ENCODE measurements at regions of chr7 and their contacts with region 1.

Region 1: DNA sequence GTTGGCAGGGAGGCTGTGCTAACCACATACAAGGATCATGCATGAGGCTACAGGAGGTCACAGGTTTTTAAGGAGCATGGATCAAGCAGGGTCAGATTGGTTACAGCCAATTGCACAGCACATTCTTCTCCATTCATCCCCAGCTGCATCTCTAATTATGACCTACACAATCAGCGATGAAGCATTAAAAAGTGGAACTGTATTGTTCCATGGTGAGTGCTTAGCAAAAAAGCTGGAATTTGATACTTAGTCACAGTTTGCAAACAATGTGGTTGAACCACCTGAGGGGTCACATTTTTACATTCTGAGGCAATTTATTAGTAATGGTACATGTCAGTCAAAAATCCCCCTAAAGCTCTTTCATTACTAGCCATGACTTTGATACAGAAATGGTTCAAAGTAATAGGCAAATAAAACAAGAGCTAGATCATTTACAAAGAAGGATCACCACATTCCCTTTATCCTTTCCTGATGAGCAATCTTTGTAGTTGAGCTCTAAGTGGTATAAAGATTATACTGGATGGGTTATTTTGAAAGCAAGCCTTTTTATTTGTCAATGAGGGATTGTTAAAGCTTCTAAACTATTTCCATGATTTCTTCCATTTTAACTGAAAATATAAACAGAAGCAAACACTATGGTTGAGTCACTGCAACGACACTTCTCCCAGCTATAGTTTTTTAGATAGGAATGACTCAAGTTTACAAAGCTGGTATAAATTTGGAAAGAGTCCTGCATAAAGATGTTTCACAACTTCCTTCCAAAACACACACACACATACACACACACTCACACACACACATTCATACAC is 217.8 kb upstream of the SEMA3A start:
- DNase-seq: peak; percentile 96
- ATAC-seq: peak; percentile 91
- H3K4me3 ChIP-seq: peak overlapping the region; percentile 43; the same call in 1 of the 2 replicates
- H3K27ac ChIP-seq: peak overlapping the region; percentile 98
- H3K4me1 ChIP-seq: peaks cover 31% of the 10 kb centered on the region
- H3K27me3 ChIP-seq: no peaks in the 10 kb centered on the region
- CTCF ChIP-seq: no peak

Region 2: GRCh38 chr7:84218681-84219080 is 193.7 kb before region 1 on chr7:
- CTCF ChIA-PET with region 1: no interaction called
- POLR2A ChIA-PET with region 1: interaction called, 5 read pairs
- intact Hi-C with region 1: loop called (anchors 1 kb)
- DNase-seq: peak; percentile 87
- ATAC-seq: peak; percentile 59
- H3K4me3 ChIP-seq: no peak overlapping the region
- H3K27ac ChIP-seq: peak overlapping the region; percentile 91
- H3K4me1 ChIP-seq: peaks cover 18% of the 10 kb centered on the region
- H3K27me3 ChIP-seq: no peaks in the 10 kb centered on the region
- CTCF ChIP-seq: no peak

Region 3: GRCh38 chr7:84372155-84372621 is 40.2 kb before region 1 on chr7:
- CTCF ChIA-PET with region 1: no interaction called
- POLR2A ChIA-PET with region 1: no interaction called
- intact Hi-C with region 1: loop called (anchors 1 kb)
- DNase-seq: peak; percentile 88
- ATAC-seq: peak; percentile 88
- H3K4me3 ChIP-seq: no peak overlapping the region
- H3K27ac ChIP-seq: peak overlapping the region; percentile 80
- H3K4me1 ChIP-seq: peaks cover 34% of the 10 kb centered on the region
- H3K27me3 ChIP-seq: no peaks in the 10 kb centered on the region
- CTCF ChIP-seq: no peak

Region 4: DNA sequence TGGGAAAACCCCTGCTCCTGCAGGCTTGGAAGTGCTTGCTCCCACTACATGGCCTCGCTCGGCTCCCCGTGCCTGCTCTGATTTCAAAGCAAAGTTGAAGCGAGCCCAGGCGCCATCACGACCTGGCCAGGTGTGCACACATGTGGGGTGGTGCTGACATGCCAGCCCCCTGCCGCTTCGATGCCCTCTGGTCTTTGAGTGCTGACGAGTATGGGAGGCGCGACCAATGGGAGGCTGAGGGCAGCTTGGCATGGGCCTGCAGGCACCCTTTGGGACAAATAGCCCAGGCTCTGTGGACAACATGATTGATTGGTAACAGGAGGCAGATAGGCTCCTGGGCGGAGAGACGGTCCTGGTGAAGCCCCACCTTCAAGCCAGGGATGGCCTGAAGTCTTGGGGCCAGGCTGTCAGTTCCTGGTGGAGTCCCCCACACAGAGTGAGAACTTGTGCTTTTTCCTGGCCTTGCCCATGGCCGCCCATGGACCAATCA is 34.7 kb after region 1 on chr7:
- CTCF ChIA-PET with region 1: no interaction called
- POLR2A ChIA-PET with region 1: no interaction called
- intact Hi-C with region 1: loop called (anchors 2 kb)
- DNase-seq: no peak
- ATAC-seq: no peak
- H3K4me3 ChIP-seq: no peak overlapping the region
- H3K27ac ChIP-seq: no peak overlapping the region
- H3K4me1 ChIP-seq: peaks cover 14% of the 10 kb centered on the region
- H3K27me3 ChIP-seq: no peaks in the 10 kb centered on the region
- CTCF ChIP-seq: no peak

Region 5: DNA sequence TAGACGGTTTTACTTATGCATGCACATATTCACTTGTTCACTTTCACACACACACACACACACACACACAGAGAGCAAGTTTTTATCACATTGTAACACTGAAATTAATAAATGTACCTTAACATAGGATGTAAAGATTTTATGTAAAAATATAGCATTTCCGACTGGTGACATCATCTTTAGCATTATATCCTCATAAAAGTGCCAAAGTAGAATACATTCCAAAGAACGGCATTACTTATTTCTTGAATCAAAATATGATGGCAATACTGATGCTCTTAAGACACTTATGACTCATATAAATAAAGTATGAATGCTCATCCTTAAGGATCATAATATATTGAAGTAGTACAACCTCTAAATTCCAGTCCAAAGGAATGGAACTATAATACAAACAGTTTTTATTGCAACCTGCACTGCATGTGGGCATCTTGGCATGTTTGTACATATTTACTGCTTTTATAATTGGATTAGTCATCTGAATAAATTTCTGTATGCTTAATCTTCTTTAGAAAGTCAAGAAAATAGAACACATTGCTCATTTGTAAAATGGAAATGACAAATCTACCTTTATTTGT is 72.2 kb after region 1 on chr7:
- CTCF ChIA-PET with region 1: no interaction called
- POLR2A ChIA-PET with region 1: no interaction called
- intact Hi-C with region 1: loop called (anchors 2 kb)
- DNase-seq: peak; percentile 88
- ATAC-seq: peak; percentile 97
- H3K4me3 ChIP-seq: no peak overlapping the region
- H3K27ac ChIP-seq: peak overlapping the region; percentile 37
- H3K4me1 ChIP-seq: peaks cover 7% of the 10 kb centered on the region; the same call in 1 of the 2 replicates
- H3K27me3 ChIP-seq: no peaks in the 10 kb centered on the region
- CTCF ChIP-seq: no peak

Measured in PC-3 (cell line).